ENCODE measurements at regions of chr2 and their contacts with region 1.

Region 1: GRCh38 chr2:64203858-64204632 is 59.8 kb upstream of the PELI1 start:
- DNase-seq: peak; percentile 88
- ATAC-seq: peak; percentile 76
- H3K4me3 ChIP-seq: peak overlapping the region; percentile 9; the same call in 1 of the 2 replicates
- H3K27ac ChIP-seq: peak overlapping the region; percentile 75
- H3K4me1 ChIP-seq: peaks cover 50% of the 10 kb centered on the region
- H3K27me3 ChIP-seq: no peaks in the 10 kb centered on the region
- CTCF ChIP-seq: no peak
- EP300 ChIP-seq: peak; percentile 38 to 80; a peak in 2 of 4 replicates
- POLR2A ChIP-seq: peak; percentile 68
- RAD21 ChIP-seq: no peak

Region 2: GRCh38 chr2:64133828-64134227 is 70.2 kb before region 1 on chr2:
- CTCF ChIA-PET with region 1: no interaction called
- POLR2A ChIA-PET with region 1: interaction called, 11 read pairs
- RAD21 ChIA-PET with region 1: interaction called, 12 read pairs
- SMC1A ChIA-PET with region 1: interaction called, 11 read pairs
- in situ Hi-C with region 1: no loop called
- intact Hi-C with region 1: no loop called
- DNase-seq: no peak
- ATAC-seq: no peak
- H3K4me3 ChIP-seq: no peak overlapping the region
- H3K27ac ChIP-seq: no peak overlapping the region; the same call in 1 of the 2 replicates
- H3K4me1 ChIP-seq: peaks cover 46% of the 10 kb centered on the region
- H3K27me3 ChIP-seq: no peaks in the 10 kb centered on the region
- CTCF ChIP-seq: no peak
- EP300 ChIP-seq: no peak
- POLR2A ChIP-seq: no peak
- RAD21 ChIP-seq: no peak

Region 3: GRCh38 chr2:64166637-64167420 is 37.2 kb before region 1 on chr2:
- CTCF ChIA-PET with region 1: no interaction called
- POLR2A ChIA-PET with region 1: no interaction called
- RAD21 ChIA-PET with region 1: interaction called, 4 read pairs
- SMC1A ChIA-PET with region 1: interaction called, 12 read pairs
- in situ Hi-C with region 1: no loop called
- intact Hi-C with region 1: no loop called
- DNase-seq: no peak
- ATAC-seq: no peak
- H3K4me3 ChIP-seq: no peak overlapping the region
- H3K27ac ChIP-seq: no peak overlapping the region
- H3K4me1 ChIP-seq: no peaks in the 10 kb centered on the region
- H3K27me3 ChIP-seq: no peaks in the 10 kb centered on the region
- CTCF ChIP-seq: no peak
- EP300 ChIP-seq: no peak
- POLR2A ChIP-seq: no peak
- RAD21 ChIP-seq: no peak

Region 4: DNA sequence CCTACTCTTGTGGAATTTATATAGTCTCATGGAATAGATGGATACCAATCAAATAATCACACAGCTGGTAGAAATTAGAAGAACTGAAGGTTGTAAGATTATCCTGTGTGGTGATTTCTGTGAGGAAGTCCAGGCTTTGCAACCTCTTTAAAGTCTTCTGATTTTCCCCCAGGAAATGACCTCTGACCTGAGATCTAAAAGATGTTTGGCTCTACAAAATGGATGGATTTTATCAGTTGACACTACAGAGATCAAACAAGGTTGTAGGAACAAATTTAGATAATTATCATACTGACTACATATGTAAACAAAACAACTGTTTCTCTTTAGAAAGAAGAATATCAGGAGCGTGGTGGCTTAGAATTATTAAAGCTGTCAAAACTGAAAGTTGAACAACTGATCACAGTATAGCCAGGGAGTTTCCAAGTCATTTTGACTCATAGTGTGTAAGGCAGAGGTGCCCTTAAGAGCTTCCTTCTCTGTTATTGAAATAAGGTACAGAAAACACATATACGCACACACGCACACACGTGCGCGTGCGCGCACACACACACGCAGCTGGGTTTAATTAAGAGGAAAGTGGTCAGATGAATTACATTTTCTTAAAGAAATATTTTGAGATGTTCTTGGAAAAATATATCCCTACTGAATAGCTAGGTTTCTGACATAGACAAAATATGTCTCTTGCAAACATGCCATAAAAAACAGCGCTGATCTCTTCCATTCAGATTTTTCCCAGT is 24.3 kb before region 1 on chr2:
- CTCF ChIA-PET with region 1: interaction called, 6 read pairs
- POLR2A ChIA-PET with region 1: interaction called, 10 read pairs
- RAD21 ChIA-PET with region 1: interaction called, 24 read pairs
- SMC1A ChIA-PET with region 1: interaction called, 30 read pairs
- in situ Hi-C with region 1: no loop called
- intact Hi-C with region 1: no loop called
- DNase-seq: peak; percentile 70
- ATAC-seq: peak; percentile 98
- H3K4me3 ChIP-seq: no peak overlapping the region
- H3K27ac ChIP-seq: peak overlapping the region; percentile 57
- H3K4me1 ChIP-seq: peaks cover 12% of the 10 kb centered on the region; the same call in 1 of the 2 replicates
- H3K27me3 ChIP-seq: no peaks in the 10 kb centered on the region
- CTCF ChIP-seq: no peak
- EP300 ChIP-seq: peak; percentile 64 to 69; a peak in 2 of 4 replicates
- POLR2A ChIP-seq: no peak
- RAD21 ChIP-seq: no peak

Region 5: GRCh38 chr2:64222351-64222750 is 18.3 kb after region 1 on chr2:
- CTCF ChIA-PET with region 1: interaction called, 5 read pairs
- POLR2A ChIA-PET with region 1: interaction called, 59 read pairs
- RAD21 ChIA-PET with region 1: interaction called, 9 read pairs
- SMC1A ChIA-PET with region 1: interaction called, 110 read pairs
- in situ Hi-C with region 1: no loop called
- intact Hi-C with region 1: no loop called
- DNase-seq: no peak
- ATAC-seq: no peak
- H3K4me3 ChIP-seq: no peak overlapping the region
- H3K27ac ChIP-seq: no peak overlapping the region; the same call in 1 of the 2 replicates
- H3K4me1 ChIP-seq: peaks cover 14% of the 10 kb centered on the region
- H3K27me3 ChIP-seq: no peaks in the 10 kb centered on the region
- CTCF ChIP-seq: no peak
- EP300 ChIP-seq: no peak
- POLR2A ChIP-seq: no peak
- RAD21 ChIP-seq: no peak

Region 6: GRCh38 chr2:64311948-64312621 is 108.0 kb after region 1 on chr2:
- CTCF ChIA-PET with region 1: interaction called, 3 read pairs
- POLR2A ChIA-PET with region 1: no interaction called
- RAD21 ChIA-PET with region 1: interaction called, 9 read pairs
- SMC1A ChIA-PET with region 1: interaction called, 18 read pairs
- in situ Hi-C with region 1: no loop called
- intact Hi-C with region 1: no loop called
- DNase-seq: no peak
- ATAC-seq: peak; percentile 80
- H3K4me3 ChIP-seq: no peak overlapping the region
- H3K27ac ChIP-seq: no peak overlapping the region
- H3K4me1 ChIP-seq: no peaks in the 10 kb centered on the region
- H3K27me3 ChIP-seq: no peaks in the 10 kb centered on the region
- CTCF ChIP-seq: peak in 2 of 3 experiments; percentile 38 to 55; a peak in 3 of 6 replicates
- EP300 ChIP-seq: no peak
- POLR2A ChIP-seq: no peak
- RAD21 ChIP-seq: no peak

Measured in GM12878 (cell line).